A673 (cell line): ENCODE measurements at regions of chr7 and their contacts with region 1.

Region 1: GRCh38 chr7:137454246-137454724 is 110.8 kb upstream of the PTN start:
- DNase-seq: peak; percentile 59
- H3K4me3 ChIP-seq: no peak overlapping the region
- H3K27ac ChIP-seq: no peak overlapping the region
- H3K4me1 ChIP-seq: no peaks in the 10 kb centered on the region
- H3K27me3 ChIP-seq: peaks cover under 1% of the 10 kb centered on the region
- CTCF ChIP-seq: peak; percentile 79

Region 2: DNA sequence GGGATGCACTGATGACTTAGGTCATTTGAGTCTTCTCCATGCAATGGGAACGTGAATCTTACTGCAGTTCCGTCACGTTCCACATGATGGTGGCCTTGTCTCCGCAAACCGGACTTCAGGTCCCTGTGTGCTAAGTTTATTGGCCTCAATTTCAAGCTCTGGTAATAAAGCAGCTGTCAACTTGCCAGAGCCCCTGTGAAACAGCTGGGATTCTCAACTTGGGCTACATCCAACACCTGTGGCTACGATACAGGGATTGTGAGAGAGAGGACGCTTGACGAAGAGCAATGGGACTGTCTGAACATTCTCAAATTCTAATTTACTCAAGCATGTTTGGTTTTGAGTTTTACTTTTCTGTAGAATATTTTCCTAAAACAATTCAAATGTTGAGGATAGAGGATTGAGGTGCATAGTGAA is 285.0 kb before region 1 on chr7:
- CTCF ChIA-PET with region 1: interaction called, 3 read pairs
- POLR2A ChIA-PET with region 1: no interaction called
- intact Hi-C with region 1: loop called (anchors 1 kb)
- DNase-seq: peak; percentile 75
- H3K4me3 ChIP-seq: no peak overlapping the region
- H3K27ac ChIP-seq: no peak overlapping the region
- H3K4me1 ChIP-seq: no peaks in the 10 kb centered on the region
- H3K27me3 ChIP-seq: no peaks in the 10 kb centered on the region
- CTCF ChIP-seq: peak; percentile 70

Region 3: GRCh38 chr7:137585591-137585990 is 131.3 kb after region 1 on chr7:
- CTCF ChIA-PET with region 1: no interaction called
- POLR2A ChIA-PET with region 1: no interaction called
- intact Hi-C with region 1: loop called (anchors 5 kb)
- DNase-seq: no peak
- H3K4me3 ChIP-seq: no peak overlapping the region
- H3K27ac ChIP-seq: no peak overlapping the region
- H3K4me1 ChIP-seq: no peaks in the 10 kb centered on the region
- H3K27me3 ChIP-seq: no peaks in the 10 kb centered on the region
- CTCF ChIP-seq: no peak